Posterior cingulate gyrus (tissue), 11 donors: ENCODE measurements at regions of chr11 and their contacts with region 1.

Region 1: DNA sequence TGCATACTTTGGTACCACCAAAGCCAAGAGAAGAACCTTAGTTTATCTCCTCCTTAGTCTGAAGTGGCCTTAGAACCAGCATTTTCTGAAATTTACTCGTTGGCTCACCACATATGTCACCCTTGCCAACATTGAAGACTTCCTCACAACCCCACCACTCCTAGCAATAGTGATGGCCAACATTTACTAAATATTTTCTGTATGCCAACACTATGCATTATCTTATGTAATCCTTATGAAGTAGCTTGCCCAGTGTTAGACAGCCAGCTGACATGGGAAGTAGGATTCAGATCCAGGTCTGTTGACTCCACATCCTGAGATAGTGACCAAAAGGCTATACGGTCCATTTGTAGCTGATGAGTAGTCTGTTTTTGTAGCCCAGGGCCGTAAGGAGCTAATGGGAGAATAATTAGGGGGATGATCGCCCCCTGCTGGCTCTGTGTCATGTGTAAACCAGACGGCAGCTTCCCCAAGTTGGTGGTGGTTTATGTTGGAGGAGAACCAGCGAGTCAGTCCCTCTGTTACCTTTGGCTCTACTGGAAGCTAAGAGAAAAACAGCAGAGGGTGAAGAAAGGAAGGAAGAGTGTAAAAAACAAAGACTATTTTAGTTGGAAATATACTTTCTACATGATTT is 120.5 kb upstream of the RASSF10 start:
- DNase-seq: peak in 8 of 10 donors; percentile 35 to 92 (median 78)

Region 2: DNA sequence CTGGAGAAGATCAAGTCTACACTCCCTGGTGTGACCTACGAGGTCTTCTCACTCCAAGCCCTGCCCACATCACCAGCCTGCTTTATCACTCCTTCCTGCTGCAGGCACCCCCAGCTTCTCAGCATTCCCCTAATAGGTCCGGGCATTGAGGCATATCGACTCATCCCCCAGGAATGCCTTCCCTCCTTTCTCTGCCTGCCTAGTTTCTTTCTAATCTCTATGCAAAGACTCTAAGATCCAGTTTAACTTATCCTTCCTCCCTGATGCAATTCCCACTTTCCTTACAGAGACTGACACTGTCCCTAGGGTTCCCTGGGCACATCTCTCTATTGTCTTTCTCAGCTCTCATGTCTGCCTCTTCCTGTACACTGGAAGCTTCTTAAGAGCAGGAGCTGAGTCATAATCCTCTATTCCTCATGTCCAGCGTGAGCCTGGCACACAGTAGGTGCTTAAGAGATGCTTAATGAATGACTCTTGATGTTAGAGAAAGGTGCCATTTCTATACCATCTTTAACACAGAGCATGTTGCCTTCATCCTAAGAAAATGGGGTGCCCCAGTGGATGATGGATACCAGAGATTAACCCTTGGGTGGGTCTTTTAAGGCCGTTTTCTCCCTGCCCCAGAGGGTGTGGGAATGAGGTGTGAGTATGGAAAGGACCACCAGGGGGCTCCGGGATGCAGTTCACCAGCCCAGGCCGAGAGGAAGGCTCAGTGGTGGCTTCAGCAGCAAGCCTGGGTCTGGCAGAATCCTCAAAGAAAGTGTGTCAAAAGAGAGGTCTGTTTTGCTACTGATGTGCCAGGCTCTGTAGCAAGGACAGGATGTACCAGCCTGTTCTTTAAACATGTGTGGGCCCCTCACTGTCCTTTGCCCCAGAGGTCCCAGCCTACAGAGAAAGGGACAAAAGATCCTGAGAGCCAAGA is 476.6 kb before region 1 on chr11:
- intact Hi-C with region 1: loop called (anchors 1 kb)
- DNase-seq: peak in 7 of 10 donors; percentile 28 to 89 (median 40)

Region 3: GRCh38 chr11:12841946-12842630 is 46.6 kb before region 1 on chr11:
- intact Hi-C with region 1: no loop called
- DNase-seq: no peak